ENCODE measurements at regions of chr9 and their contacts with region 1.

Region 1: GRCh38 chr9:128448746-128449145 is 7.1 kb upstream of the ODF2 start:
- DNase-seq: no peak
- ATAC-seq: no peak
- H3K4me3 Mint-ChIP-seq: no peak overlapping the region
- H3K27ac Mint-ChIP-seq: no peak overlapping the region
- H3K4me1 Mint-ChIP-seq: no peaks in the 10 kb centered on the region
- H3K27me3 Mint-ChIP-seq: peaks cover 3% of the 10 kb centered on the region

Region 2: GRCh38 chr9:128438343-128439109 is 10.2 kb before region 1 on chr9:
- CTCF ChIA-PET with region 1: interaction called, 18 read pairs
- POLR2A ChIA-PET with region 1: no interaction called
- DNase-seq: peak; percentile 88
- ATAC-seq: peak; percentile 96
- H3K4me3 Mint-ChIP-seq: no peak overlapping the region
- H3K27ac Mint-ChIP-seq: no peak overlapping the region
- H3K4me1 Mint-ChIP-seq: peaks cover 4% of the 10 kb centered on the region
- H3K27me3 Mint-ChIP-seq: no peaks in the 10 kb centered on the region

Measured in activated CD8-positive, alpha-beta T cell treated with anti-CD3 and anti-CD28 coated beads, Interleukin-2, amount 10 ng/mL, durations not matched to agents 7 days and 5 days (primary cell).